Right ventricle myocardium superior (tissue), 1 donor: ENCODE measurements at regions of chr11 and their contacts with region 1.

Region 1: GRCh38 chr11:76318744-76319384 is 62.1 kb downstream of the THAP12 start:
- DNase-seq: peak; percentile 88
- ATAC-seq: peak; percentile 96

Region 2: DNA sequence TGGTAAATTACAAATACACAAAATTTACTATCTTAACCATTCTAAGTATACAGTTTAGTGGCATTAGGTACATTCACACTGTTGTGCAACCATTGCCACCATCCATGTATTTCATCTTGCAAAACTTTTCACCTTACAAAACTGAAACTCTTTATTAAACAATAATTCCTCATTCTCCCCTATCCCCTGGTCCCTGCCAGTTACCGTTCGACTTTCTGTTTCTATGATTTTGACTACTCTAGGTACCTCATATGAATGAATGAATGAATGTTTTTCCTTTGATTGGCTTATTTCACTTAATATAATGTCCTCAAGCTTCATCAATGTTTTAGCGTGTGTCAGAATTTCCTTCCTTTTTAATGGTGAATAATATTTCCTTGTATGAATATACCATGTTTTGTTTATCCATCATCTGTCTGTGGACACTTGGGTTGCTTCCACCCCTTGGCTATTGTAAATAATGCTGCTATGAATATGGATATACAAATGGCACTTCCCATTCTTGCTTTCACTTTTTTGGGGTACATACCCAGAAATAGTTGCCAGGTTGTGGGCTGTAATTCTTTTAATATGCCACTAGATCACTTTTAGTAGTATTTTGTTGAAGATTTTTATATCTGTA is 410.8 kb before region 1 on chr11:
- intact Hi-C with region 1: loop called (anchors 5 kb)
- DNase-seq: no peak
- ATAC-seq: no peak

Region 3: DNA sequence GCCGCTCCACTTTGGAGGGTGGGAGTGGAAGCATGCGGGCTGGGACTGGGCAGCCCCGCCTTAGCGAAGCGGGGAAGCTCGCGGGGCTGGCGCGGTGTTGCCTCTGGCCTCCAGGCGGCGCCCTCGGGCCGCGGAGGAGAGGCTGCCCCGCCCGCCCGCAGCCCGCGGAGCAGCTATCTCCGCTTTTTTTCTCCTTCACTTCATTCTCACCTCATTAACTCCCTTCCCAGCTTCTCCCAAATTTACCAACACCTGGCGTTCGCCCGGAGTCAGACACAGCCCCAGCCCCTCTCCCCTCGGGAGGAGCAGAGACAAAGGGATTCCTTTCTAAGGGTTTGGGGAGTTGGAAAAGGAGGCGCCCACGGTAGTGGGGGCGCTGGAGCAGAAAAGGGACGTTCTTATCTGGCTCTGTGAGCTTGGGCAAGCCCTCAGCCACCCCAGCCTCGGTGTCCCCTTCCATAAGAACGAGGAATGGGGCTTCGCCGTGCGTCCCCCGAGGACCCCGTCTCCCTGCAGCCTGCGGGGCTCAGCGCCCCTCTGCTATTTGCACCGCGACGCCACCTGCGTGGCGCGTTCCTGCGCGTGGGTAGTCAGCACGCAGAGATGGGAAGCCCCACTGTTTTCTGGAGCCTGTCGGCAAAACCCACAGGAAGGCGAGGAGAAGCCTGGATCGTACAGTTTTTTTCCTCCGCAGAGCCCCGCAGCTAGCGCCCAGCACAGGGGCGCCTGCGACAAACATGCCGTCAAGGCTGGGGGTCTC is 111.0 kb before region 1 on chr11:
- intact Hi-C with region 1: loop called (anchors 2 kb)
- DNase-seq: peak; percentile 90
- ATAC-seq: peak; percentile 82

Region 4: GRCh38 chr11:76436020-76436419 is 117.2 kb after region 1 on chr11:
- intact Hi-C with region 1: no loop called
- DNase-seq: no peak
- ATAC-seq: no peak

Region 5: DNA sequence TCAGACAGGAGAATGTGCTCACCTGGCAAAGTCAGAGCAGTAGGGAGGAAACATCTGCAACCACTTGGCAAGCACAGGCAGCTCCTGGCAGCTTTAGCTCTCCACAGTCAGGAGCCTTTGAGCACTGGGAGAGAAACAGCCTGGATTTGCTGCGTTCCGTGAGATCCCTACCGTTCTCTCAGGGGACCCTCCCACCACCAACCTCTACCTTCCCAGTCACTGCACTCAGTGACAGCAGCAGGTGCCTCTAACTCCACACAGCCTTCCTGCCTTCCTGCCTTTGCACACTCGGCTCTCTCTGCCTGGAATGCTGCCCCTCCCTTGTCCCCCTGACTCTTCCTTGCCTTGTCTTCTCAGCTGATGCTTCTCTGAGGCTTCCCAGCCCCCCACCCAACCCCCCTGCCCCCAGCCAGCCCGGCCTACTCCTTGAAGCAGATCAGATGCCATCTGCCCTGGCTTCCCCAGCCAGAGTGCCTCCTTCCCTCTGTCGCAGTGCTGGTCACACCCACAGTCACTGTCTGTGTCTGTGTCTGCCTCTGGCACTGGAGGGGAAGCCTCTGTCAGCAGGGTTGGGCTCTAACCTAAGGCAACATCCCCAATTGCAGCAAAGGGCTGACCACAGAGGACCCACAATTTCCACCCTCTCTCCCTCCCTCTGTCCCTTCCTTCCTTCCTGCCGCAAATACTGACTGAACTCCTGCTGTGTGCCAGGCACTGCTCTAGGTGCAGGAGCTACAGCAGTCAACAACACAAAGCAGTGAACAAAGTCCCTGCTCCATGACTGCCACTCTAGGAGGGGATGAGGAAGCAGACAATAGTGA is 449.4 kb after region 1 on chr11:
- intact Hi-C with region 1: no loop called
- DNase-seq: peak; percentile 79
- ATAC-seq: peak; percentile 36